Activated naive CD4-positive, alpha-beta T cell treated with anti-CD3 and anti-CD28 coated beads for 36 hours (primary cell): ENCODE measurements at regions of chr3 and their contacts with region 1.

Region 1: DNA sequence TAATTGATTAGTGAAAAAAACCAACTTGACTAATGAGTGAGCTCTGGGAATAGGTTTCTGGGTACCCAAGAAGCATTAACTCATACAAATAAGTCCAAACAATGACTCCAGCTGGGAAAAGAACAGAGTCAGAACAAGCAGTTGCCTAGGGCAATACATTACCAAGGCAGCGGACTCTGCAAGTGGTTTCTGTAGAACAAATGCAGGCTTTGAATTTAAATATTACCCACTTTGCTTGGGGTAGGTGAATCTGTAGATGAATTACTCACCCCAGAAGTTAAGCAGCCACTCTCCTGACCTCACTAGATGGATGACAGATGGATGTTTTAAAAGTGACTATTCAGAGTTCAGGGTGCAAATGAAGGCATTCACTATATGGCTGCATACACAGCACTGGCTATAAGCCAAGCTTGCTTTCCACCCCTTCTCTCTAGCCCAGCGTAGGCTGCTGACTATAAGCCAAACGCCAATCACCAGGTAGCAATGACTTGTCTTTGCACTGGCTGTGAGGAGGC is 73.1 kb upstream of the BHLHE40 start:
- DNase-seq: peak; percentile 61
- H3K4me3 Mint-ChIP-seq: no peak overlapping the region
- H3K27ac Mint-ChIP-seq: no peak overlapping the region
- H3K4me1 Mint-ChIP-seq: peaks cover 72% of the 10 kb centered on the region
- H3K27me3 Mint-ChIP-seq: no peaks in the 10 kb centered on the region

Region 2: DNA sequence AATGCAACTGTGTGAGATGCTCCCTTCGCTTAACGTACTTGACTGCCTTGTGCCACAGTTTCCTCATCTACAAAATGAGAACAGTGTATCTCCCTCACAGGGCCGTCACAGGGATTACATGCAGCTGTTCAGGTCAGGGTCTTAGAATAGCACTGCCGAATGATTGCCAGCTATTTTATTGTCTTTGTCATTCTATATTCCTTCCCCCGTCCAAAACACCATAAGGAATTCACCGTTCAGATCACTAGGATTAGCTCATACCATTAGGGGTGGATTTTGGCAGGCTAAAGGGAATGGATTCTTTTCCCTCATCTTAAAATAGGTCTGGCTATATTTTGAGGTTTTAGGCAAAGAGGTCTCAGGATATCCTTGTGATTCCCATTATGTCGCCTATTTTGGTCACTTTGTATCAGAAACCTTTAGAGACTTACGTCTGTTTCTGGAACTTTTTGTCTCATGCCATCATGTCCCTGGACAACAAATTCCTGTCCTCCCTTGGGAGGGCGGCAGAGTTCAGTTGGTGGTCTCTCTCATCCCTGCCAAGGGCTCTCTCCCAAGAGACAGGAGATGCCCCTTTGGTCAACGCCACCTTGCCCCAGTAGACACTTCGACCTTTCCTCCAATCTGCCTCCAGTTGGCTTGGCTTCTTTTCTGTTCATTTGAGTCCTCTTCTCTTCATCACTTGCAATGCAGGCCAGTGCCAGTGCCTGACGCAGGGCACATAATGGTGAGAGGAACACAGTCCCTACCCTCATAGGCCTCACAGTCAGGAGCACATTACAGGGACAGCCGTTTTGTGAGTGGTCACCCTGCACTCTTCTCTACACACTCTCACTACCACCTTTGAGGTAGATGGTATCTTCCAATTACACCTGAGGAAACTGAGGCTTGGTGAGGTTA is 98.5 kb before region 1 on chr3:
- CTCF ChIA-PET with region 1: no interaction called
- intact Hi-C with region 1: loop called (anchors 1 kb)
- DNase-seq: no peak
- H3K4me3 Mint-ChIP-seq: no peak overlapping the region
- H3K27ac Mint-ChIP-seq: no peak overlapping the region
- H3K4me1 Mint-ChIP-seq: peaks cover 28% of the 10 kb centered on the region
- H3K27me3 Mint-ChIP-seq: no peaks in the 10 kb centered on the region

Region 3: GRCh38 chr3:4834403-4834866 is 71.7 kb before region 1 on chr3:
- CTCF ChIA-PET with region 1: interaction called, 3 read pairs
- intact Hi-C with region 1: loop called (anchors 1 kb)
- DNase-seq: peak; percentile 84
- H3K4me3 Mint-ChIP-seq: peak overlapping the region; percentile 13
- H3K27ac Mint-ChIP-seq: peak overlapping the region; percentile 93
- H3K4me1 Mint-ChIP-seq: peaks cover 85% of the 10 kb centered on the region
- H3K27me3 Mint-ChIP-seq: no peaks in the 10 kb centered on the region

Region 4: DNA sequence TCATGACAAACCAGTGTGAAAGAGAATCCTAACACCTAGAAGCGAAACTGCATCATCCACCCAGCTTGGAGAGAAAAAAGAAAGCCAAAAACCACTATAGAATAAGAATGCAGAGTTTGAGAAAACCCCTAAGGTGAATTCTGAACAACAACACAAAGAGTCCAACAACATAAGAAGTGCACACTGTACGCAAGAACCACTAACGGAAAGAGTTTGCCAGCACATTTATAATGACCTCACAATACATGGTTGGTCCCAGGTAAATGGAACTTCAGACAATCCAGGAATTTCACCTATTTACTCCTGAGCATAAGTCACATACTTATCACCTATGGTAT is 55.3 kb before region 1 on chr3:
- CTCF ChIA-PET with region 1: interaction called, 10 read pairs
- intact Hi-C with region 1: loop called (anchors 1 kb)
- DNase-seq: peak; percentile 64
- H3K4me3 Mint-ChIP-seq: peak overlapping the region; percentile 38
- H3K27ac Mint-ChIP-seq: peak overlapping the region; percentile 94
- H3K4me1 Mint-ChIP-seq: peaks cover 84% of the 10 kb centered on the region
- H3K27me3 Mint-ChIP-seq: no peaks in the 10 kb centered on the region

Region 5: DNA sequence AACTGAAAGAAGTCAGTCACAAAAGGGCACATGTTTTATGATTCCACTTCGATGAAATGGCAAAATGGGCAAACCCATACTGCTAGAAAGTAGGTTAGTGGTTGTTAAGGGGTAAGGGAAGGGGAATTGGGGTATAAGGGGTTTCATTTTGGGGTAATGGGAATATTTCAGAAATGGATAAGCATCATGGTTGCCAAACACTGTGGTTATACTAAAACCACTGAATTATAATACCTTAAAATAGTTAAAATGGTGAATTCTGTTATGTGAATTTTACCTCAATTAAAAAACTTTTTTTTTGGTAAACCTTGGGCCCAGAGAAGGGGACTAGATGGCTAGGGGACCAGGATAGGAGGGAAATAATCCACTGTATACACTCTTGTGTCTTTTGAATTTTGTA is 20.7 kb after region 1 on chr3:
- CTCF ChIA-PET with region 1: no interaction called
- intact Hi-C with region 1: loop called (anchors 2 kb)
- DNase-seq: no peak
- H3K4me3 Mint-ChIP-seq: no peak overlapping the region
- H3K27ac Mint-ChIP-seq: no peak overlapping the region
- H3K4me1 Mint-ChIP-seq: peaks cover 18% of the 10 kb centered on the region
- H3K27me3 Mint-ChIP-seq: no peaks in the 10 kb centered on the region

Region 6: DNA sequence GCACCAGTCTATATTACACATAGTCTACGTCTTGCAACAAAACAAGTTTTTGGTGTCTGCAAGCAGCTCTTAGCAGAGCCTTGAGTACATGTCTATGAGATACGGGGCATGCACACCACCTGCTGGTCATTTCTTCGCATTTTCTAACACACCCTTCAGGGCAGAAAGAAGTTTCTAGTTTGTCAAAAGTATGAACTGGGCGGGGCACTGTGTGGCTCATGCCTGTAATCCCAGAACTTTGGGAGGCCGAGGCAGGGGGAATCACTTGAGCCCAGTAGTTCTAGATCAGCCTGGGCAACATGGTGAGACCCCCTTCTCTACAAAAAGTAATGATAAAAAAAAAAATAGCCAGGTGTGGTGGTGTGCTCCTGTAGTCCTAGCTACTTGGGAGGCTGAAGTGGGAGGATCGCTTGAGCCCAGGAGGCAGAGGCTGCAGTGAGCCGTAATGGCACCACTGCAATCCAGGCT is 151.7 kb after region 1 on chr3:
- CTCF ChIA-PET with region 1: no interaction called
- intact Hi-C with region 1: loop called (anchors 5 kb)
- DNase-seq: peak; percentile 91
- H3K4me3 Mint-ChIP-seq: no peak overlapping the region
- H3K27ac Mint-ChIP-seq: no peak overlapping the region
- H3K4me1 Mint-ChIP-seq: peaks cover 5% of the 10 kb centered on the region
- H3K27me3 Mint-ChIP-seq: no peaks in the 10 kb centered on the region